ENCODE measurements at regions of chr7 and their contacts with region 1.

Region 1: DNA sequence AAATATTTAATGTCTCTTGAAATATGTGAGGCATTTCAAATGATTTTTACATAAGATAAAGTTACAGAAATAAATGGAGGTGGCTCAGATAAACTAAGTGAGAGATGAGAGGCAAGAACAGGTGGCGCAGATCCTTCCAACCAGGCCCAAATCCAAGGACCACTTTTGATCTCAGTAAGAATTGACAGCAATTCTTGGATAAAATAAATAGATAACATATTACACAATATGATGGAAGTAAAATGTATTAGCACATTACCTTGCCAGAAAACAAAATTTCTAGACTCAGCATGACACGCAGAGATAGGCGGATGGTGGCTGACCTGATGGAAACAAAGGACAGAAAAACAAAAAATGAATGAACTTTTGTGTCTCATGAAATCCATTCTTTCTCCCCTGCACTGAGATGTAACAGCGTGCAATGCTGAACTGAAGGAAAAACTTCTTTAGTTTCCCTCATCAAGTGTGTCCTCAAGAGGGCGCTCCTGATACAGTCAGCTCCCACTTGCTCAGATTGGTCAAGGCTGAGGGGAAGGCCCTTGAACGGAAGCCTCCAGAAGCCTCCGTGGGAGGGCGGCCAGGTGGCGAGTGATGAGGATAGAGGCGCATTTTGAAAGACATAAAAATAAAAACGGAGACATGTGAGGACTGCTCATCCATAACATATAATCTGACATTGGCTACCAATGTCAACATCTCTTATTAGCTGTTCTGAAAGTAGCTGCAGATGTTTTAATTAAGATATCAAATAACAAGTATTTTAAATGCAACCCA is 62.8 kb upstream of the GSDME start:
- DNase-seq: peak; percentile 80
- H3K4me3 Mint-ChIP-seq: peak overlapping the region; percentile 64
- H3K27ac Mint-ChIP-seq: peak overlapping the region; percentile 100
- H3K4me1 Mint-ChIP-seq: peaks cover 46% of the 10 kb centered on the region
- H3K27me3 Mint-ChIP-seq: no peaks in the 10 kb centered on the region

Region 2: DNA sequence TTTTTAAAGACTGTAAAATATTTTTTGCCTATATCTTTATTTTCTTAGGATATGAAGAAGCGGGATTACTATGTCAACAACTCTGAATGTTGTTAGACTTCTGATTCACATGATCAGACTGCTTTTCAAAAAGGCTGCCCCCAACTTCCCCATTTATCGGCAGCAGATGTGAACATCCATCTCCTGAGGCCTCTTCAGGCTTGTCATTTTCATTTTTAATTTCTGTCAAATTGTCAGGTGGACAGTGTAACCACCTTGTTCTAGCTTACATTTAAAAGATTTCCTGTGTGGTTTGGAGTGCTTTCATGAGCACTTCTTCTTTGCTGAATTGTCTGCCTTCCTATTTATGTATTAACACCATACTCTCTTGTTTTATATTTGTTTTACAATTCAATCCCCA is 16.0 kb after region 1 on chr7:
- CTCF ChIA-PET with region 1: interaction called, 9 read pairs
- POLR2A ChIA-PET with region 1: interaction called, 15 read pairs
- DNase-seq: no peak
- H3K4me3 Mint-ChIP-seq: no peak overlapping the region
- H3K27ac Mint-ChIP-seq: peak overlapping the region; percentile 16
- H3K4me1 Mint-ChIP-seq: peaks cover 54% of the 10 kb centered on the region
- H3K27me3 Mint-ChIP-seq: no peaks in the 10 kb centered on the region

Region 3: DNA sequence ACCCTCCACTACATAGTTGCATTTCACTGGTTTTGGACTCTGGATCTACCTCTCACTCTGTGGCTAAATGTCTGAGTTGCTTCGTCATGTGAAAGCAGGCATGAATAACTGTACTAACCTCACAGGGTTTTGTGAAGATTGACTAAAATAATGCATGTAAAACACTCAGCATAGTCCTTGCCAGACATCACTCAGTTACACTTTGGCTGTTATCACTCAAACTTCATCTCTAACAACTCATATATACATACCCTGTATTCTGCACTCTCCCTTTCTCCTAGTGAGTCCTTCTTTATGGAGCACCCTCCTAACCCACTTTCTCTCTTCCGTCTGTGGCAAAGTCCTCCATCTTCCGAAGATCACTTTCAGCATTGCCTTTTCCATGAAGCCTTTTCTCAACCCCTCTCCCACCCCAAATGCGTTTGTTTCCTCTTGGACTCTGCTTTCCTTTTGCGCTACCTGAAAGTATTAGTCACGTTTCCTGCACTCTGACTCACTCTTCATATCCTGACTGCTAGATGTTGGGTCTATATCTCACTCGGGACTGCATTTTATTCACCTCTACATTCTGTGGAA is 87.3 kb after region 1 on chr7:
- CTCF ChIA-PET with region 1: interaction called, 22 read pairs
- POLR2A ChIA-PET with region 1: interaction called, 47 read pairs
- DNase-seq: peak; percentile 52
- H3K4me3 Mint-ChIP-seq: no peak overlapping the region
- H3K27ac Mint-ChIP-seq: no peak overlapping the region
- H3K4me1 Mint-ChIP-seq: peaks cover 28% of the 10 kb centered on the region
- H3K27me3 Mint-ChIP-seq: no peaks in the 10 kb centered on the region

Region 4: GRCh38 chr7:25069900-25070443 is 249.9 kb after region 1 on chr7:
- CTCF ChIA-PET with region 1: interaction called, 47 read pairs
- POLR2A ChIA-PET with region 1: interaction called, 7 read pairs
- DNase-seq: peak; percentile 47
- H3K4me3 Mint-ChIP-seq: no peak overlapping the region
- H3K27ac Mint-ChIP-seq: no peak overlapping the region
- H3K4me1 Mint-ChIP-seq: peaks cover 16% of the 10 kb centered on the region
- H3K27me3 Mint-ChIP-seq: no peaks in the 10 kb centered on the region

Region 5: GRCh38 chr7:25098096-25099046 is 278.3 kb after region 1 on chr7:
- CTCF ChIA-PET with region 1: interaction called, 32 read pairs
- POLR2A ChIA-PET with region 1: interaction called, 5 read pairs
- DNase-seq: peak; percentile 73
- H3K4me3 Mint-ChIP-seq: no peak overlapping the region
- H3K27ac Mint-ChIP-seq: no peak overlapping the region
- H3K4me1 Mint-ChIP-seq: peaks cover 10% of the 10 kb centered on the region
- H3K27me3 Mint-ChIP-seq: peaks cover 12% of the 10 kb centered on the region